CD14-positive monocyte (primary cell): ENCODE measurements at regions of chr7 and their contacts with region 1.

Region 1: GRCh38 chr7:155638366-155638765 is 6.1 kb upstream of the RBM33 start:
- DNase-seq: no peak
- H3K4me3 ChIP-seq: no peak overlapping the region
- H3K4me3 Mint-ChIP-seq: no peak overlapping the region
- H3K27ac ChIP-seq: no peak overlapping the region
- H3K27ac Mint-ChIP-seq: no peak overlapping the region
- H3K4me1 ChIP-seq: peaks cover 1 to 3% of the 10 kb centered on the region in 2 donors
- H3K4me1 Mint-ChIP-seq: peaks cover 2% of the 10 kb centered on the region
- H3K27me3 ChIP-seq: peaks cover 0 to 2% of the 10 kb centered on the region in 2 donors
- H3K27me3 Mint-ChIP-seq: peaks cover 2 to 11% (median 6%) of the 10 kb centered on the region in 3 donors
- CTCF ChIP-seq: no peak

Region 2: GRCh38 chr7:155610633-155611193 is 27.7 kb before region 1 on chr7:
- intact Hi-C with region 1: loop called in 1 of 2 experiments (anchors 2 kb)
- DNase-seq: no peak
- H3K4me3 ChIP-seq: no peak overlapping the region
- H3K4me3 Mint-ChIP-seq: peak overlapping the region in 1 of 2 donors; percentile 52
- H3K27ac ChIP-seq: no peak overlapping the region
- H3K27ac Mint-ChIP-seq: peak overlapping the region in 1 of 7 donors; percentile 60
- H3K4me1 ChIP-seq: peaks cover 0 to 2% of the 10 kb centered on the region in 2 donors
- H3K4me1 Mint-ChIP-seq: peaks cover 8% of the 10 kb centered on the region
- H3K27me3 ChIP-seq: no peaks in the 10 kb centered on the region
- H3K27me3 Mint-ChIP-seq: peaks cover 5 to 7% (median 7%) of the 10 kb centered on the region in 3 donors
- CTCF ChIP-seq: no peak

Region 3: DNA sequence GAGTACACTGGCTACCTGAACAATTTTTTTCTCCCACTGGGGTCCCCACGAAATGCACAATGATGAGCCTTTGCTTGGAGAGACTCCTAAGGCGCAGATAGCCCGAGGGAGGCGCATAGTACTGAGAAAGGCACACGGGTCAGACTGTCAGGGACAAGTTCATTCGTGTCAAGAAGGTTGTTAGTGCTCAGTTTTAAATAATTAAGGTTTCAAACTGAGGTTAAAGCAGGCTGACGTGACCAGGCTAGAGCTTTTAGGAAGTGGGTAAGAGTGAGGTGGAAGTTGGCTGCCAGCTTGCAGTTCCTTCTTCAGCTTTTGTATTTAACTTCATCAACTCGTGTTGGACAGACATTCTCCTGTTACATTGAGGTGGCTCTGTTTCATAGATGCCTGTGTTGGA is 37.7 kb after region 1 on chr7:
- intact Hi-C with region 1: no loop called
- DNase-seq: peak in 1 of 3 donors; percentile 23
- H3K4me3 ChIP-seq: no peak overlapping the region
- H3K4me3 Mint-ChIP-seq: no peak overlapping the region
- H3K27ac ChIP-seq: peak overlapping the region; percentile 20 to 22
- H3K27ac Mint-ChIP-seq: peak overlapping the region in 3 of 7 donors; percentile 52 to 84 (median 69)
- H3K4me1 ChIP-seq: peaks cover 9% of the 10 kb centered on the region in 2 donors
- H3K4me1 Mint-ChIP-seq: peaks cover 13% of the 10 kb centered on the region
- H3K27me3 ChIP-seq: no peaks in the 10 kb centered on the region
- H3K27me3 Mint-ChIP-seq: peaks cover 0 to 1% (median 0%) of the 10 kb centered on the region in 3 donors
- CTCF ChIP-seq: no peak

Region 4: GRCh38 chr7:155928583-155928982 is 290.2 kb after region 1 on chr7:
- intact Hi-C with region 1: no loop called
- DNase-seq: no peak
- H3K4me3 ChIP-seq: no peak overlapping the region
- H3K4me3 Mint-ChIP-seq: peak overlapping the region in 1 of 2 donors; percentile 1
- H3K27ac ChIP-seq: no peak overlapping the region
- H3K27ac Mint-ChIP-seq: no peak overlapping the region
- H3K4me1 ChIP-seq: no peaks in the 10 kb centered on the region
- H3K4me1 Mint-ChIP-seq: no peaks in the 10 kb centered on the region
- H3K27me3 ChIP-seq: no peaks in the 10 kb centered on the region
- H3K27me3 Mint-ChIP-seq: peaks cover 0 to 7% (median 5%) of the 10 kb centered on the region in 3 donors
- CTCF ChIP-seq: no peak